A673 (cell line): ENCODE measurements at regions of chr4 and their contacts with region 1.

Region 1: DNA sequence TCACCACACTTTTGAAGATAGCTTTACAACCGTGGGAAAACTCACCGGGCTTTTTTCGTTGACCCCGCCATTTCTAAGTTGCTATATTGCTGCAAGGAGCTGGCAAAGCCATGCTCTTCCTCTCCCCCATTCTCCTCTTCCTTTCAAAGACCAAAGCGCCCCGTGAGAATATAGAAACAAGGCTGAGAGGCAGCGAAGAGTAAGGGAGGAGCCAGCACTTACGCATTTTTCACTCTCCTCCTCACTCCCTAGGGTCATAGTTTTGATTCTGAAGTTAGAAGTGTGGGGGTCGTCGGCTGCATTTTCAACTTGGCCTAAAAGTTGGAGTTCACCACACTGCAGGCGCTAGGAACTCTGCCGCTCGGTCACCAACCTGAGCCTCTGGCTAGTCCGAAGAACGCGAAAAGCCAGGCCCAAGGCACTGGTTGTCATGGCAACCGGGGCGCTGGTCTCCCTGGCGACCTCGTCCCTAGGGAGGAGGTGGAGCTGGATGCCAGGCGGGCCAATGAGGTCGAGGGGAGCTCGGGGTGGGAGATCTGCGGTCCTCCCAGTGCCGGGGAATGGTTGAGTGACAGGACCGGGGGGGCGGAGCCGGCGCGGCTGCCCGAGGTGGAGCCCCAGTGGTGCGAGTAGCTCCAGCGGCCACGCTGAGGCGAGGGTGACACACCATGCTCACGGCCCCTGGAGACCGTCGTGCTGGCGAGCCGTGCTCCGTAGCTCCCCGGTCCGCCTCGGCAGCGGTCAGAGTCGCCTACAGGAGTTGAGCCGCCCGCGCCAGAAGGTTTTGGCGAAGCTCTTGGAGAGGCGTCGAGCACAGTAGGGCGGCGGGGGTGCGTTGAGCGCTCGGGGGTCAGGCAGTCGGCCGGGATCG is at the start of gene PTPN13:
- DNase-seq: peak; percentile 98
- H3K4me3 ChIP-seq: peak within 1 kb of the TSS; percentile 93
- H3K27ac ChIP-seq: peak within 1 kb of the TSS; percentile 89
- H3K4me1 ChIP-seq: no peaks in the 10 kb centered on the region
- H3K27me3 ChIP-seq: no peaks in the 10 kb centered on the region
- CTCF ChIP-seq: no peak
- total RNA-seq, gene PTPN13: 103 and 107 TPM in 2 replicates

Region 2: GRCh38 chr4:86497980-86498862 is 95.7 kb before region 1 on chr4:
- CTCF ChIA-PET with region 1: no interaction called
- POLR2A ChIA-PET with region 1: no interaction called
- intact Hi-C with region 1: loop called (anchors 2 kb)
- DNase-seq: peak; percentile 77
- H3K4me3 ChIP-seq: no peak overlapping the region
- H3K27ac ChIP-seq: peak overlapping the region; percentile 83
- H3K4me1 ChIP-seq: peaks cover 58% of the 10 kb centered on the region
- H3K27me3 ChIP-seq: no peaks in the 10 kb centered on the region
- CTCF ChIP-seq: peak; percentile 73

Region 3: GRCh38 chr4:86557526-86557925 is 36.4 kb before region 1 on chr4:
- CTCF ChIA-PET with region 1: no interaction called
- POLR2A ChIA-PET with region 1: interaction called, 3 read pairs
- intact Hi-C with region 1: loop called (anchors 5 kb)
- DNase-seq: no peak
- H3K4me3 ChIP-seq: no peak overlapping the region
- H3K27ac ChIP-seq: peak overlapping the region; percentile 99
- H3K4me1 ChIP-seq: peaks cover 86% of the 10 kb centered on the region
- H3K27me3 ChIP-seq: no peaks in the 10 kb centered on the region
- CTCF ChIP-seq: no peak

Region 4: DNA sequence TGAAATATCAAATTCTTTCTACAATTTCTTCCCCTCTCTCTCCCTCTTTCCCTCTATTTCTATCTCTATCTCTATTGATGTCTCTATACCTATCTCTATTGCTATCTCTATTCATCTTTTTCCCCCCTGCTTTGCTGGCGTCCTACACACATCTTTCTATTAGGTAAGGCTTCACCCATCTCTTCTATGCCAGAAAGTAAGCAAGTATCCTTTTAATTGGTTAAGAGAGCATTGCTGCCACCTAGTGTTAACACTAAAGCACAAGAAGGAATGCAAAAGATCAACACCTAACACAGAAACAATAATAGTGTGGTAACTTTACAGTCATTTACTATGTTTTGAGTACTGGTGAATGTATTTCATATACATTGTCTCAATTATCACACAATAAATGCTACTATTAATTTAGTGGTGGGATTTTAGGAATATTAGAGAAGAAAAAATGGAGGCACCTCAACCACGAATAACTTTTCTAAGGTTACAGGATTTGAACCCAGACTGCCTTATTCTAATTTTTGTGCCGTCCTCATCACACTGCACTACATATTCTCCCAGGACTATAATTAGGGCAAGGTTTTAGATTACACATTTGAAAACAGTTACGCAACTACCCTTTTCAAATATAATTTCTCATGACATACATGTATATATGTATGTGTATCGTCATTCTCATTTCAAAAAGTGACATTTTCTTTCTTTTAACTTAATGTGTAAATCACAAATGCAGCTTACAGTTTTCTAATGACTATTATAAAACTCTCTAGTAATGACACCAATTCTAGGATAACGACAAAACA is 302.0 kb after region 1 on chr4:
- CTCF ChIA-PET with region 1: no interaction called
- POLR2A ChIA-PET with region 1: no interaction called
- intact Hi-C with region 1: loop called (anchors 5 kb)
- DNase-seq: peak; percentile 74
- H3K4me3 ChIP-seq: no peak overlapping the region
- H3K27ac ChIP-seq: no peak overlapping the region
- H3K4me1 ChIP-seq: peaks cover 12% of the 10 kb centered on the region
- H3K27me3 ChIP-seq: no peaks in the 10 kb centered on the region
- CTCF ChIP-seq: peak; percentile 65

Region 5: GRCh38 chr4:86972997-86973396 is 379.1 kb after region 1 on chr4:
- CTCF ChIA-PET with region 1: no interaction called
- POLR2A ChIA-PET with region 1: interaction called, 11 read pairs
- intact Hi-C with region 1: no loop called
- DNase-seq: no peak
- H3K4me3 ChIP-seq: no peak overlapping the region
- H3K27ac ChIP-seq: peak overlapping the region; percentile 96
- H3K4me1 ChIP-seq: peaks cover 72% of the 10 kb centered on the region
- H3K27me3 ChIP-seq: no peaks in the 10 kb centered on the region
- CTCF ChIP-seq: no peak